Esophagus muscularis mucosa (tissue), 4 donors: ENCODE measurements at regions of chr9 and their contacts with region 1.

Region 1: DNA sequence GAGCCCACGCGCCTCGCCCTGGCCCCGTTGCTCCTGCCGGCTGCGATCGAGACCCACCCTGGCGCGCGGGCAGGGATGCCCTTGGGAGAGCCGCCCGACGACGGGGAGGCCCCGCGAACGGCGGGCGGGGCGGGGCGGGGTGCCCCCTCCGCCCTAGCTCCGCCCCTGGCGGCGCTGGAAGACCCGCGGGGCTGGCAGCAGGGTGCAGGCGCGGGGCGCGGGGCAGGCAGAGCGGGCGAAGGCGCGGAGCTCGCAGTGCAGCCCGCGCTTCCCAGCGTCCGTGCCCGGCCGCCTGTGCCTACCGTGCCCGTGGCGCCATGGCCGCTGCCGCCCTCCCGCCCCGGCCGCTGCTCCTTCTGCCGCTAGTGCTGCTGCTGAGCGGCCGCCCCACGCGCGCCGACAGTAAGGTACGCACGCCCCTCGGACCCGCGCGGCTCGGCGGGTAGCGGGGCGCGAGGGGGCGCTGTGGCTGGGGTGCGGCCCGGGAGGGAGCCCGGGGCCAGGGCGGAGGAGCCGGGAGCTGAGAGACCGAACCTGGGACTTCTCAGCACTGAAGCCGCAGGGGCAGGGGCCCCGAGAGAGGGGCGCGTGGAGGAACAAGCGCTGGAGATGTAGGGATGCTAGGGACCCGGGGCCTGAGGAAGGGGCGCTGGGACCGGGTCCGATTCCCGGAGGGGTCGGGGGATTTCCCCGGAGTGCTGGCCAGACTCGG is at the start of gene OLFML2A:
- DNase-seq: no peak
- H3K4me3 ChIP-seq: peak within 1 kb of the TSS; percentile 67 to 78 (median 74)
- H3K27ac ChIP-seq: peak within 1 kb of the TSS; percentile 81 to 84 (median 83)
- H3K4me1 ChIP-seq: peaks cover 42 to 72% (median 68%) of the 10 kb centered on the region in 4 donors
- H3K27me3 ChIP-seq: no peaks in the 10 kb centered on the region
- CTCF ChIP-seq: peak; percentile 39 to 49 (median 42)
- EP300 ChIP-seq: no peak
- POLR2A ChIP-seq: no peak
- total RNA-seq, gene OLFML2A: 39.0 to 98.9 (median 60.3) TPM

Region 2: GRCh38 chr9:124812401-124813016 is 35.4 kb after region 1 on chr9:
- intact Hi-C with region 1: loop called (anchors 5 kb)
- DNase-seq: no peak
- H3K4me3 ChIP-seq: no peak overlapping the region
- H3K27ac ChIP-seq: peak overlapping the region; percentile 68 to 81 (median 74)
- H3K4me1 ChIP-seq: peaks cover 13 to 41% (median 36%) of the 10 kb centered on the region in 4 donors
- H3K27me3 ChIP-seq: no peaks in the 10 kb centered on the region
- CTCF ChIP-seq: no peak
- EP300 ChIP-seq: no peak
- POLR2A ChIP-seq: no peak

Region 3: GRCh38 chr9:124975131-124975530 is 198.0 kb after region 1 on chr9:
- intact Hi-C with region 1: no loop called
- DNase-seq: no peak
- H3K4me3 ChIP-seq: no peak overlapping the region
- H3K27ac ChIP-seq: no peak overlapping the region
- H3K4me1 ChIP-seq: no peaks in the 10 kb centered on the region
- H3K27me3 ChIP-seq: no peaks in the 10 kb centered on the region
- CTCF ChIP-seq: no peak
- EP300 ChIP-seq: no peak
- POLR2A ChIP-seq: no peak